ENCODE measurements at regions of chr7 and their contacts with region 1.

Region 1: GRCh38 chr7:80659120-80660055 is 20.9 kb downstream of the CD36 start:
- DNase-seq: no peak
- ATAC-seq: peak in 2 of 4 donors; percentile 41 to 45
- H3K4me3 ChIP-seq: no peak overlapping the region
- H3K27ac ChIP-seq: peak overlapping the region; percentile 11 to 65 (median 42)
- H3K4me1 ChIP-seq: peaks cover 4 to 76% (median 50%) of the 10 kb centered on the region in 12 donors
- H3K27me3 ChIP-seq: no peaks in the 10 kb centered on the region
- CTCF ChIP-seq: peak; percentile 49 to 89 (median 68)
- POLR2A ChIP-seq: no peak

Region 2: GRCh38 chr7:80453699-80454340 is 205.6 kb before region 1 on chr7:
- intact Hi-C with region 1: loop called in 1 of 10 experiments (anchors 10 kb)
- DNase-seq: no peak
- ATAC-seq: no peak
- H3K4me3 ChIP-seq: no peak overlapping the region
- H3K27ac ChIP-seq: no peak overlapping the region
- H3K4me1 ChIP-seq: no peaks in the 10 kb centered on the region
- H3K27me3 ChIP-seq: no peaks in the 10 kb centered on the region
- CTCF ChIP-seq: peak in 11 of 12 donors; percentile 26 to 66 (median 53)
- POLR2A ChIP-seq: no peak

Region 3: GRCh38 chr7:80467069-80467468 is 192.3 kb before region 1 on chr7:
- intact Hi-C with region 1: loop called in 1 of 10 experiments (anchors 10 kb)
- DNase-seq: no peak
- ATAC-seq: peak; percentile 75 to 88 (median 80)
- H3K4me3 ChIP-seq: no peak overlapping the region
- H3K27ac ChIP-seq: peak overlapping the region in 10 of 12 donors; percentile 1 to 57 (median 28)
- H3K4me1 ChIP-seq: peaks cover 0 to 25% (median 8%) of the 10 kb centered on the region in 12 donors
- H3K27me3 ChIP-seq: no peaks in the 10 kb centered on the region
- CTCF ChIP-seq: no peak
- POLR2A ChIP-seq: no peak

Region 4: GRCh38 chr7:80500325-80500724 is 159.1 kb before region 1 on chr7:
- intact Hi-C with region 1: no loop called
- DNase-seq: no peak
- ATAC-seq: peak in 3 of 4 donors; percentile 34 to 64 (median 53)
- H3K4me3 ChIP-seq: no peak overlapping the region
- H3K27ac ChIP-seq: peak overlapping the region in 11 of 12 donors; percentile 29 to 83 (median 71)
- H3K4me1 ChIP-seq: peaks cover 3 to 42% (median 26%) of the 10 kb centered on the region in 12 donors
- H3K27me3 ChIP-seq: no peaks in the 10 kb centered on the region
- CTCF ChIP-seq: no peak
- POLR2A ChIP-seq: no peak

Region 5: GRCh38 chr7:80517282-80517747 is 142.1 kb before region 1 on chr7:
- intact Hi-C with region 1: loop called in 7 of 10 experiments (anchors 5 to 10 kb)
- DNase-seq: peak in 1 of 5 donors; percentile 31
- ATAC-seq: peak; percentile 64 to 78 (median 70)
- H3K4me3 ChIP-seq: no peak overlapping the region
- H3K27ac ChIP-seq: peak overlapping the region in 7 of 12 donors; percentile 0 to 63 (median 31)
- H3K4me1 ChIP-seq: peaks cover 0 to 18% (median 13%) of the 10 kb centered on the region in 12 donors
- H3K27me3 ChIP-seq: no peaks in the 10 kb centered on the region
- CTCF ChIP-seq: peak in 8 of 12 donors; percentile 14 to 59 (median 34)
- POLR2A ChIP-seq: no peak

Region 6: DNA sequence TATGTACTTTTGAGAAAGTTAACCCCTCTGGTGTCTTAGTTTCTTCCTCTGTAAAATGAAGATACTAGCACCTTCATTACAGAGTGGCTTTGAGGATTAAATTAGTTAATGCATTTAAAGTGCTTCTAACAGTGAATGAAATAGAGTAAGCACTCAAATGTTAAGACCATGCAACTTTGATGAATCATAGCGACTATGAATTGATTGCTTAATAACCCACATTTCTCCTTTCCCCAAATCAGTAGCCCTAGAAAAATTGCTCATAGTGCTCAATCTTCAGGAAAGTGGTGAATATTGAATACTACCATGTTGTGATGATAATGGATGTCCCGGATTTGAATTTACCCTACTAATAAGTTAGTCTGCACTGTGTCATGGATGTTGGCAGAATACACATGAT is 27.2 kb after region 1 on chr7:
- intact Hi-C with region 1: no loop called
- DNase-seq: no peak
- ATAC-seq: no peak
- H3K4me3 ChIP-seq: no peak overlapping the region
- H3K27ac ChIP-seq: no peak overlapping the region
- H3K4me1 ChIP-seq: peaks cover 0 to 3% (median 0%) of the 10 kb centered on the region in 12 donors
- H3K27me3 ChIP-seq: no peaks in the 10 kb centered on the region
- CTCF ChIP-seq: no peak
- POLR2A ChIP-seq: no peak

Measured in heart left ventricle (tissue), 16 donors.